ENCODE measurements at regions of chr9 and their contacts with region 1.

Region 1: DNA sequence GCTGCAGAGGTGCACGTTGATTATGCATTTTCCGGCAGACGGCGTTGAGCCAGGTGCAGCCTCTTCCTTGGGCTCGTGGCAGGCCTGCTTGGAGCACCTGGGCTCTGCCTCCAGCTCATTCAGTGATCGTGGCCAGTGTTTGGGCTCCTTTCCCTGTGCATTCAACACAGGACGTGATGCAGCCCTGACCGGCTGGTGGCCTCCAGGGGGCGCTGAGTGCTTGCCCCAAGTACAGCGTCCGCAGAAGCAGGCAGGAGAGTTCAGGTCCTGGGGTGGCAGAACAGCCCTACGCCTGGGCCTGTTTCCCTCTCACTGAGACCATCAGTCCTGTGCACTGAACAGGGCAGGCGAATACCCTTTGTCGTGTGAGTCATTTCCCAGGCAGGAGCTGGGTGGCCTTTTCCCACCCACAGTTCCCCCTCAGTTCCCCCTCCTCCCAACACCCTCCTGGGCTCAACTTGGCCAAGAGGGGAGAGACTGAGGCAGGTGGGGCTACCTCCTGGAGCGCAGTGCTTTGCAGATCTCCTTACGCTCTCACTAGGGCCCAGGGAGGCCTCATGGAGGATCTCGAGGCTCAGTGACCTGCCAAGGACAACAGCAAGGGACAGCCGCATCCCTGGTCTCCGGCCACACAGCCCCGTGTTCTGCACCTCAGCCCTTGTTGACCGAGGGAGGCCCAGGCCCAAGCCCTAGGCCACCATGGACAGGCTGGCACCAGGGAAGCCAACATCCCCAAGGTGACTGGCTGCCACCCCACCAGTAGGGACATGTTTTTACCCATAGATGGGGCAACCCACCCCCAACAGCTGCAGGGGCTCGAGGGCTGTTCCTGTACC is 52.9 kb downstream of the LRSAM1 start:
- DNase-seq: no peak
- H3K4me3 ChIP-seq: no peak overlapping the region
- H3K27ac ChIP-seq: peak overlapping the region; percentile 37
- H3K4me1 ChIP-seq: no peaks in the 10 kb centered on the region
- H3K27me3 ChIP-seq: no peaks in the 10 kb centered on the region
- CTCF ChIP-seq: peak; percentile 87 to 94 (median 91)
- POLR2A ChIP-seq: no peak

Region 2: DNA sequence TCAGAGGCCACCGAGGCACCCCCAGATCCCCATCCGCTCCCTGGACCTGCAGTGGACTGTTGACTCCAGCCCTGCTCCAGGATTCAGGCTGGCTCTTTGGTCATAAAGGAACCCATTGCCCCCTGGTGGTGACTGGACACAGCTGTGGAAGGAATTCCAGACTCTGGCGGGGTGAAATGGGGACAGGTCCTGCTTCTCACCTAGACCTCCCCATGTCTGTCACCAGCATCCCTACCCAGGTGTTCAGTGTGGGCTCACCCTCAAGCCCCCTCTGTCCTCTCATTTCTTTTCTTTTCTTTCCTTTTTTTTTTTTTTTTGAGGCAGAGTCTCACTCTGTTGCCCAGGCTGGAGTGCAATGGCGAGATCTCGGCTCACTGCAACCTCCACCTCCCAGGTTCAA is 82.4 kb after region 1 on chr9:
- intact Hi-C with region 1: loop called (anchors 2 kb)
- DNase-seq: no peak
- H3K4me3 ChIP-seq: no peak overlapping the region
- H3K27ac ChIP-seq: no peak overlapping the region
- H3K4me1 ChIP-seq: peaks cover 9% of the 10 kb centered on the region
- H3K27me3 ChIP-seq: no peaks in the 10 kb centered on the region
- CTCF ChIP-seq: peak; percentile 81 to 91 (median 88)
- POLR2A ChIP-seq: no peak